Colonic mucosa (tissue), 4 donors: ENCODE measurements at regions of chr9 and their contacts with region 1.

Region 1: DNA sequence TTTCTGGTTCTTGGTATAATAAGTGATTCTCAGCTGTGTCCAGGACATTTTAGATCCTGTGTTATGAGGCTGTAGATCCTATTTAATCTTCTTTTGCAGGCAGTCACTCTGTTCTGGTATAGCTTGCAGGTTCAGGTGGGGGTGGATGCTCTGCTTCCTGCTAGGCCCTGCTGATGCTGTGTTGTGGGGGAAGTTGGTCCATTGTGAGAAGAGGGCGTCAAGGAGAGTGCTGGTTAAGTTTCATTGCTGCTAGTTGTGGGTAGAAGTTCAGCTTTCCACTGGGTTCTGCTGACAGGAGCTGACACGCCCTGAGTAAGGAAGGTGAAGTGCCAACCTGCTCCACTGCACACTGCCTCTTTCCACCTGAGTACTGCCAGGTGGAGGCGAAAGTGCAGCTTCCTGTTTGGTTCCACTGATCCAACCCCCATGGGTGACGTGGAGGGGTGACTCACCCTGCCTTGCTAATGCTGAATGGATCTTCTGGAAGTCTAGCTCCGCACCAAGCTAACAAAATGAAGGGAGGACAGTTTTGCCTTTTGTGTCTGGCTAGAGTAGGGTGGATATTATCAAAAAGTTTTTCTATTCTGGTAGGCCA is 16.3 kb downstream of the NMRK1 start:
- DNase-seq: peak; percentile 93
- H3K4me3 ChIP-seq: no peak overlapping the region
- H3K27ac ChIP-seq: peak overlapping the region; percentile 64
- H3K4me1 ChIP-seq: no peaks in the 10 kb centered on the region
- H3K27me3 ChIP-seq: no peaks in the 10 kb centered on the region
- CTCF ChIP-seq: no peak

Region 2: GRCh38 chr9:74773886-74774479 is 297.6 kb before region 1 on chr9:
- intact Hi-C with region 1: loop called (anchors 2 kb)
- DNase-seq: peak; percentile 86
- H3K4me3 ChIP-seq: no peak overlapping the region
- H3K27ac ChIP-seq: no peak overlapping the region
- H3K4me1 ChIP-seq: no peaks in the 10 kb centered on the region
- H3K27me3 ChIP-seq: no peaks in the 10 kb centered on the region
- CTCF ChIP-seq: peak; percentile 91

Region 3: GRCh38 chr9:74887041-74887980 is 184.3 kb before region 1 on chr9 and contains the start of gene TRPM6:
- intact Hi-C with region 1: loop called (anchors 10 kb)
- DNase-seq: peak; percentile 88
- H3K4me3 ChIP-seq: peak within 1 kb of the TSS; percentile 68
- H3K27ac ChIP-seq: peak within 1 kb of the TSS; percentile 71
- H3K4me1 ChIP-seq: no peaks in the 10 kb centered on the region
- H3K27me3 ChIP-seq: no peaks in the 10 kb centered on the region
- CTCF ChIP-seq: no peak
- total RNA-seq, gene TRPM6: 15.1 to 44.1 TPM

Region 4: GRCh38 chr9:74952281-74953151 is 119.1 kb before region 1 on chr9 and contains the start of gene C9orf40:
- intact Hi-C with region 1: loop called (anchors 5 kb)
- DNase-seq: peak; percentile 93
- H3K4me3 ChIP-seq: peak within 1 kb of the TSS; percentile 86
- H3K27ac ChIP-seq: peak within 1 kb of the TSS; percentile 97
- H3K4me1 ChIP-seq: no peaks in the 10 kb centered on the region
- H3K27me3 ChIP-seq: no peaks in the 10 kb centered on the region
- CTCF ChIP-seq: peak; percentile 73
- total RNA-seq, gene C9orf40: 14.4 to 21.9 TPM

Region 5: GRCh38 chr9:75019022-75019421 is 52.6 kb before region 1 on chr9:
- intact Hi-C with region 1: loop called (anchors 5 kb)
- DNase-seq: no peak
- H3K4me3 ChIP-seq: no peak overlapping the region
- H3K27ac ChIP-seq: no peak overlapping the region
- H3K4me1 ChIP-seq: no peaks in the 10 kb centered on the region
- H3K27me3 ChIP-seq: no peaks in the 10 kb centered on the region
- CTCF ChIP-seq: no peak